HEK293 (cell line): ENCODE measurements at regions of chr6 and their contacts with region 1.

Region 1: GRCh38 chr6:43774776-43775534 is 4.9 kb downstream of the VEGFA start:
- H3K4me3 ChIP-seq: no peak overlapping the region
- H3K27ac ChIP-seq: no peak overlapping the region
- H3K4me1 ChIP-seq: peaks cover 10% of the 10 kb centered on the region
- CTCF ChIP-seq: peak; percentile 81

Region 2: DNA sequence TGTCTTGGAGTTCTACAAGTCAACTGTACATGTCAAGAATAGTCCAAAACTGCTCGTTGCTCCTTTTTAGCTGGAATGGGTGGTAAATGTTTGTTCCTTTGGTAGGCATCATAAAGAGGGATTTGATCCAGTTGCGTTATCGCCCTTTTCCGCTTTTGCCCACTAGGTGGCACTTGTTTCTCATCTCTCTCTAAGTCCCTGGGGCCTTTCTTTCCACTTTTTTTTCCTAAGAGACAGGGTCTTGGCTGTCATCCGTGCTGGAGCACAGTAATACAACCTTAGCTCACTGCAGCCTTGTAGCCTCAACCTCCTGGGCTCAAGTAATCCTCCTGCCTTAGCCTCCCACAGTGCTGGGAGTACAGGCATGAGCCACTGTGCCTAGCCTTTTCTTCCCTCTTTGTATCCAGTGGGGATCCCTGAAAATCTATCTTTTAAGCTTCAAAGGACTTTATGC is 166.6 kb before region 1 on chr6:
- CTCF ChIA-PET with region 1: interaction called, 11 read pairs
- POLR2A ChIA-PET with region 1: interaction called, 3 read pairs
- H3K4me3 ChIP-seq: no peak overlapping the region
- H3K27ac ChIP-seq: no peak overlapping the region
- H3K4me1 ChIP-seq: no peaks in the 10 kb centered on the region
- CTCF ChIP-seq: peak; percentile 83

Region 3: DNA sequence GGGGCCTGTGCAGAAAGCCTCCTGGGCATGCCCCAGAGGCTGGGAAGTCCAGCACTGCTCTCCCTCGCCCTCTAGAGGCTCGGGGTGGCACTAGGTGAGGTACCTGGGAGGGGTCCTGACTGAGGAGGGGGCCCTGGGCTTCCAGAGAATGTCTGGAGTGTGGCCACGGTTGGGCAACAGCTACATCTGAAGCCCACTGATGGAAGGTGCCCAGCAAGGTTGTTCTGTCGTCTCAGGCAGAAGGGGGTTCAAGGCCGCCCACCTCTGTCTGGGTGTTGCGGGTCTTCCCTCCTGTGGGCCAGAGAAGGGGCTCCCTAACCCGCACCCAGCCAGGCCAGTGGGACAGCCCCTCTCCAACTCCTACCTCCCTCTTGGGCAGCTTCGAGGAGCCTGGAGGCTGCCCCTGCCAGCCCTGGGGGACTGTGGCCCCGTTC is 16.3 kb before region 1 on chr6:
- CTCF ChIA-PET with region 1: interaction called, 110 read pairs
- POLR2A ChIA-PET with region 1: interaction called, 15 read pairs
- H3K4me3 ChIP-seq: no peak overlapping the region
- H3K27ac ChIP-seq: no peak overlapping the region
- H3K4me1 ChIP-seq: no peaks in the 10 kb centered on the region; the same call in 1 of the 2 replicates
- CTCF ChIP-seq: peak; percentile 30; the same call in 1 of the 2 replicates

Region 4: GRCh38 chr6:43800746-43801488 is 26.0 kb after region 1 on chr6:
- CTCF ChIA-PET with region 1: interaction called, 18 read pairs
- POLR2A ChIA-PET with region 1: interaction called, 3 read pairs
- H3K4me3 ChIP-seq: no peak overlapping the region
- H3K27ac ChIP-seq: no peak overlapping the region
- H3K4me1 ChIP-seq: no peaks in the 10 kb centered on the region
- CTCF ChIP-seq: no peak

Region 5: GRCh38 chr6:43833223-43833995 is 58.5 kb after region 1 on chr6:
- CTCF ChIA-PET with region 1: interaction called, 15 read pairs
- POLR2A ChIA-PET with region 1: interaction called, 3 read pairs
- H3K4me3 ChIP-seq: no peak overlapping the region
- H3K27ac ChIP-seq: no peak overlapping the region
- H3K4me1 ChIP-seq: no peaks in the 10 kb centered on the region
- CTCF ChIP-seq: no peak

Region 6: DNA sequence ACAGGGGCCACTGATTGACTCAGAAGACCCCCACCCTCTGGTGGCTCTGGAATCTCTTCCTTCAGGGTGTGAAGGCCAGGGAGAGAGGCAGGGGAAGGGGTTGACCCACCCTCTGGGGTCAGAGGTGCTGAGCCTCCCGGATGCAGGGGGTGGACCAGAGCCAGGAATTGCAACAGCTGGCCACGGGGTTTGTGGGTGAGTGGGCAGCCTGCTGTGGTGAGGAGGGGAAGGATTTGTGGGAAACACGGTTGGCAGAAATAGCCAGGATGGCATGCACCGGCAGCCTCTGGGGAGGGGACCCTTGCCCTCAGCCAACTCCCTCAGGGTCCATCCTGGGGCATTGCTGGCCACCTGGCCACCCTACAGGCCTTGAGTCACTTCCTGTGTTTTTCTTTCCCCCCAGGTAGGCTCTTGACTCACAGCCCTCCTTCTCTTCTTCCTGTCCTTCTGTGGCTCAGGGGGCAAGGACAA is 259.5 kb after region 1 on chr6:
- CTCF ChIA-PET with region 1: no interaction called
- POLR2A ChIA-PET with region 1: no interaction called
- H3K4me3 ChIP-seq: no peak overlapping the region
- H3K27ac ChIP-seq: no peak overlapping the region; the same call in 1 of the 2 replicates
- H3K4me1 ChIP-seq: no peaks in the 10 kb centered on the region
- CTCF ChIP-seq: no peak